H1 (cell line): ENCODE measurements at regions of chr17 and their contacts with region 1.

Region 1: GRCh38 chr17:67018471-67019437 is 25.6 kb upstream of the CACNG1 start:
- DNase-seq: no peak
- H3K4me3 ChIP-seq: no peak overlapping the region
- H3K27ac ChIP-seq: no peak overlapping the region
- H3K4me1 ChIP-seq: no peaks in the 10 kb centered on the region; a peak in 1 of 7 replicates
- H3K27me3 ChIP-seq: no peaks in the 10 kb centered on the region
- CTCF ChIP-seq: no peak
- EP300 ChIP-seq: no peak
- POLR2A ChIP-seq: no peak
- RAD21 ChIP-seq: no peak

Region 2: GRCh38 chr17:66915204-66916096 is 103.3 kb before region 1 on chr17:
- CTCF ChIA-PET with region 1: interaction called, 19 read pairs
- POLR2A ChIA-PET with region 1: interaction called, 3 read pairs
- DNase-seq: no peak
- H3K4me3 ChIP-seq: no peak overlapping the region
- H3K27ac ChIP-seq: no peak overlapping the region
- H3K4me1 ChIP-seq: no peaks in the 10 kb centered on the region
- H3K27me3 ChIP-seq: no peaks in the 10 kb centered on the region
- CTCF ChIP-seq: peak; percentile 57 to 67 (median 60)
- EP300 ChIP-seq: no peak
- POLR2A ChIP-seq: no peak
- RAD21 ChIP-seq: peak; percentile 68 to 80

Region 3: DNA sequence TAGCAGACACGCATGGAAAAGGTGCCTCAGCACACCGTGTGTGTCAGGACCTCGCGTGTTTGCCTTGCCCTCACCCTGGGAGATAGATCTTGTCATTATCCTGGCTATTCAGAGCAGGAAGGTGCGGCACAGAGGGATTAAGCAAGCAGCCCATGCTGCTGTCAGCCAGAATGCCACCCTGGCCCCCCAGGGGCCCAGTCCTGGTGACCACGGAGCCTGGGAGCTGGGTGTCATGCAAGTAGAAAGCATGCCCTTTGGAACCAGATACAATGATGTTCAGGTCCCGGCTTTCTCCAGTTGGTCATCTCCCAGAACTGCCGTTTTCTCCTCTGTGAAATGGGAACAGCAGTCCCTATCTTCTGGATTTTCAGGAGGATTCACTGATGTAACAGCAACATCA is 24.4 kb before region 1 on chr17:
- CTCF ChIA-PET with region 1: interaction called, 17 read pairs
- POLR2A ChIA-PET with region 1: no interaction called
- DNase-seq: no peak
- H3K4me3 ChIP-seq: no peak overlapping the region
- H3K27ac ChIP-seq: no peak overlapping the region
- H3K4me1 ChIP-seq: no peaks in the 10 kb centered on the region
- H3K27me3 ChIP-seq: no peaks in the 10 kb centered on the region
- CTCF ChIP-seq: no peak
- EP300 ChIP-seq: no peak
- POLR2A ChIP-seq: no peak
- RAD21 ChIP-seq: no peak

Region 4: DNA sequence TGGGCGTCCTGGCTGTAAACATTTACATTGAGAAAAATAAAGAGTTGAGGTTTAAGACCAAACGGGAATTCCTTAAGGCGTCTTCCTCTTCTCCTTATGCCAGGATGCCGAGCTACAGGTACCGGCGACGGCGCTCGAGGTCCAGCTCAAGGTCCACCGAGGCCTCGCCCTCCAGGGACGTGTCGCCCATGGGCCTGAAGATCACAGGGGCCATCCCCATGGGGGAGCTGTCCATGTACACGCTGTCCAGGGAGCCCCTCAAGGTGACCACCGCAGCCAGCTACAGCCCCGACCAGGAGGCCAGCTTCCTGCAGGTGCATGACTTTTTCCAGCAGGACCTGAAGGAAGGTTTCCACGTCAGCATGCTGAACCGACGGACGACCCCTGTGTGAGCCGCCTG is 11.9 kb after region 1 on chr17:
- CTCF ChIA-PET with region 1: interaction called, 10 read pairs
- POLR2A ChIA-PET with region 1: interaction called, 3 read pairs
- DNase-seq: no peak
- H3K4me3 ChIP-seq: no peak overlapping the region
- H3K27ac ChIP-seq: no peak overlapping the region
- H3K4me1 ChIP-seq: no peaks in the 10 kb centered on the region
- H3K27me3 ChIP-seq: no peaks in the 10 kb centered on the region
- CTCF ChIP-seq: no peak
- EP300 ChIP-seq: no peak
- POLR2A ChIP-seq: no peak
- RAD21 ChIP-seq: no peak

Region 5: GRCh38 chr17:67068999-67069398 is 50.2 kb after region 1 on chr17:
- CTCF ChIA-PET with region 1: interaction called, 13 read pairs
- POLR2A ChIA-PET with region 1: no interaction called
- DNase-seq: no peak
- H3K4me3 ChIP-seq: no peak overlapping the region
- H3K27ac ChIP-seq: no peak overlapping the region
- H3K4me1 ChIP-seq: no peaks in the 10 kb centered on the region; a peak in 1 of 7 replicates
- H3K27me3 ChIP-seq: no peaks in the 10 kb centered on the region
- CTCF ChIP-seq: no peak
- EP300 ChIP-seq: no peak
- POLR2A ChIP-seq: no peak
- RAD21 ChIP-seq: no peak